ENCODE measurements at regions of chr4 and their contacts with region 1.

Region 1: GRCh38 chr4:52545099-52546069 is 113.7 kb downstream of the USP46 start:
- DNase-seq: peak; percentile 47 to 62 (median 56)
- H3K4me3 ChIP-seq: no peak overlapping the region
- H3K4me3 Mint-ChIP-seq: no peak overlapping the region
- H3K27ac ChIP-seq: no peak overlapping the region
- H3K27ac Mint-ChIP-seq: peak overlapping the region in 1 of 7 donors; percentile 42
- H3K4me1 ChIP-seq: no peaks in the 10 kb centered on the region
- H3K4me1 Mint-ChIP-seq: no peaks in the 10 kb centered on the region
- H3K27me3 ChIP-seq: no peaks in the 10 kb centered on the region
- H3K27me3 Mint-ChIP-seq: peaks cover 5 to 9% of the 10 kb centered on the region in 2 donors

Region 2: GRCh38 chr4:52376132-52376704 is 169.2 kb before region 1 on chr4:
- CTCF ChIA-PET with region 1: interaction called, 10 read pairs
- POLR2A ChIA-PET with region 1: no interaction called
- intact Hi-C with region 1: no loop called
- DNase-seq: peak in 4 of 5 donors; percentile 12 to 27 (median 24)
- H3K4me3 ChIP-seq: no peak overlapping the region
- H3K4me3 Mint-ChIP-seq: no peak overlapping the region
- H3K27ac ChIP-seq: no peak overlapping the region
- H3K27ac Mint-ChIP-seq: no peak overlapping the region
- H3K4me1 ChIP-seq: no peaks in the 10 kb centered on the region
- H3K4me1 Mint-ChIP-seq: no peaks in the 10 kb centered on the region
- H3K27me3 ChIP-seq: no peaks in the 10 kb centered on the region
- H3K27me3 Mint-ChIP-seq: peaks cover 2 to 8% of the 10 kb centered on the region in 2 donors

Region 3: GRCh38 chr4:52665592-52665991 is 120.2 kb after region 1 on chr4:
- CTCF ChIA-PET with region 1: interaction called, 44 read pairs
- POLR2A ChIA-PET with region 1: no interaction called
- intact Hi-C with region 1: loop called (anchors 5 kb)
- DNase-seq: peak in 4 of 5 donors; percentile 14 to 31 (median 28)
- H3K4me3 ChIP-seq: no peak overlapping the region
- H3K4me3 Mint-ChIP-seq: no peak overlapping the region
- H3K27ac ChIP-seq: no peak overlapping the region
- H3K27ac Mint-ChIP-seq: peak overlapping the region in 1 of 7 donors; percentile 19
- H3K4me1 ChIP-seq: peaks cover 2% of the 10 kb centered on the region
- H3K4me1 Mint-ChIP-seq: peaks cover 4 to 10% (median 7%) of the 10 kb centered on the region in 4 donors
- H3K27me3 ChIP-seq: no peaks in the 10 kb centered on the region
- H3K27me3 Mint-ChIP-seq: peaks cover 6 to 10% of the 10 kb centered on the region in 2 donors

Region 4: DNA sequence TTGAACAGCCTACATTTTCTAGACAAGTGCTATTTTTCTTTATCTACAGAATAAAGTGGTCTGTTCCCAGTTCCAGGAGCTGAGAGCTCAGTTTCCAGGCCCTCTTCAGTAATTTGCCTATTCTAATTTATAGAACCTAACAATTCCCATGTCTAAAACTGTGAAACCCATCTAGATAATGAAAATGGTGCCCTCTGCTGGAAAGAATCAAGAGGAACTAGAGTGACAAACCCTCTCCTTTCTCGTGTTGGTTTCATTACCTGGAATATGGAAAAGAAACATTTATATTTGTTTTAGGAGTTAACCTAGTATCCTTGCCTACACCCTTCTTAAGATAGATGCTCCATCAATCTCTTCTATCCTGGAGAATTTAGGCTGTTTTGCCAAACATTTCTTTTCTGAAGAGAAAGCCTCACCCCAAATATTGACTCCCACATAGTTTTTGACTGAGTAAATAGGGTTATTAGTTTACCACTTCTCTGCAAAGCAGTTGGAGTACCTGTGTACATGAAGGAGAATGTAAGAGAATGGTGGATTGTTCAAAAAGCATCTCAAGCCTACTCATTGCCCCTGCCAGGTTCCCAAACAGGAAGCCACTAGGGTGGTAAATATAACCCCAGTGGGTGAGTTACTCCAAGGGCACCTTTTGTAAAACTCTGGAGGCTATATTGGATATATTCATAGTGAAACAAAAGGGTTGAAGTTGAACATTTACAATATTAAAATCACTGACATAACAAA is 438.3 kb after region 1 on chr4:
- CTCF ChIA-PET with region 1: interaction called, 91 read pairs
- POLR2A ChIA-PET with region 1: no interaction called
- intact Hi-C with region 1: loop called (anchors 5 kb)
- DNase-seq: peak in 4 of 5 donors; percentile 37 to 50 (median 40)
- H3K4me3 ChIP-seq: no peak overlapping the region
- H3K4me3 Mint-ChIP-seq: no peak overlapping the region
- H3K27ac ChIP-seq: no peak overlapping the region
- H3K27ac Mint-ChIP-seq: no peak overlapping the region
- H3K4me1 ChIP-seq: no peaks in the 10 kb centered on the region
- H3K4me1 Mint-ChIP-seq: peaks cover 0 to 4% (median 0%) of the 10 kb centered on the region in 4 donors
- H3K27me3 ChIP-seq: no peaks in the 10 kb centered on the region
- H3K27me3 Mint-ChIP-seq: no peaks in the 10 kb centered on the region

Region 5: GRCh38 chr4:53377319-53378170 is 832.2 kb after region 1 on chr4 and contains the start of gene FIP1L1:
- CTCF ChIA-PET with region 1: no interaction called
- POLR2A ChIA-PET with region 1: no interaction called
- intact Hi-C with region 1: loop called (anchors 5 kb)
- DNase-seq: peak; percentile 93 to 97 (median 95)
- H3K4me3 ChIP-seq: peak within 1 kb of the TSS; percentile 71 to 89
- H3K4me3 Mint-ChIP-seq: peak within 1 kb of the TSS; percentile 98 to 100 (median 99)
- H3K27ac ChIP-seq: peak within 1 kb of the TSS; percentile 92
- H3K27ac Mint-ChIP-seq: peak within 1 kb of the TSS; percentile 97 to 100 (median 99)
- H3K4me1 ChIP-seq: peaks cover 37% of the 10 kb centered on the region
- H3K4me1 Mint-ChIP-seq: peaks cover 19 to 53% (median 34%) of the 10 kb centered on the region in 4 donors
- H3K27me3 ChIP-seq: no peaks in the 10 kb centered on the region
- H3K27me3 Mint-ChIP-seq: no peaks in the 10 kb centered on the region
- total RNA-seq, gene FIP1L1: 73.0 to 90.7 TPM

Measured in CD4-positive, alpha-beta memory T cell (primary cell).